ENCODE measurements at regions of chr10 and their contacts with region 1.

Region 1: GRCh38 chr10:97731346-97732051 is 5.4 kb upstream of the ZFYVE27 start:
- DNase-seq: peak in 5 of 6 donors; percentile 13 to 79 (median 51)
- ATAC-seq: peak; percentile 81 to 91 (median 90)
- H3K4me3 ChIP-seq: no peak overlapping the region
- H3K27ac ChIP-seq: no peak overlapping the region
- H3K4me1 ChIP-seq: peaks cover 0 to 2% (median 0%) of the 10 kb centered on the region in 3 donors
- H3K27me3 ChIP-seq: no peaks in the 10 kb centered on the region
- CTCF ChIP-seq: peak; percentile 49 to 72 (median 68)

Region 2: GRCh38 chr10:97434055-97434454 is 297.4 kb before region 1 on chr10:
- intact Hi-C with region 1: no loop called
- DNase-seq: no peak
- ATAC-seq: peak in 1 of 4 donors; percentile 29
- H3K4me3 ChIP-seq: no peak overlapping the region
- H3K27ac ChIP-seq: no peak overlapping the region
- H3K4me1 ChIP-seq: no peaks in the 10 kb centered on the region
- H3K27me3 ChIP-seq: no peaks in the 10 kb centered on the region
- CTCF ChIP-seq: no peak

Region 3: DNA sequence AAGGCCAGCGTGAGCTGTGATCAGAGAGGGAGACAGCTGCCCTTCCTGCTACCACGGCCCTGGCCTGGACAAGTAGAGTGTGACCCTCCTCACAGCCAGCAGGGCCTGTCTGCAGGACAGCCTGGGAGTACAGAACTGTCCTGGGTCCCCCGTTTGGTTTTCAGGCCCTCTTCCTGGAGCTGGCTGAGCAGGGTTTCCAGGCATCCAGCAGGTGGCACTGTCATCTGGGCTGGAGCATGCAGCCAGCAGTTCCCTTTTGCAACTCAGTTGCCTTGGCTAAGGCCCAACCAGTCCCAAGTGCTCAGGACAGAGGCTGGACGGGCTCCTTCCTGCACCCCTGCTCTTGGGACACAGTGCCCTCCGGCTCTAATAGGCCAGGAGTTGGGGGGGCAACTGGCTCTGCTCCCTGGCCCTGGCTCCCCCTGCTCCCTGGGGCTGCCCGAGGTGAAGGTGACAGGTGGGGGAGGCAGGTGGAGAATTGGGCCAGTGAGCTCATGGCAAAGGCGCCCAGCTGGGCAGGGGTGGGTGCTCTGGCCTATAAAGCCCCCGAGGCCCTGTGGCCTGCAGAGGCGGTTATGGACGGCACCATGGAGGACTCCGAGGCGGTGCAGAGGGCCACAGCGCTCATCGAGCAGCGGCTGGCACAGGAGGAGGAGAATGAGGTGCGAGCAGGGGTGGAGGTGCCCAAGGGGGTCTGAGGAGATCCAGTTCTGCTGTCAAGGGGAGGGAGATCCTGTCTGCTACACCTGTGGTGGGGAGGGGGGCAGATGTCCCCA is 159.1 kb before region 1 on chr10 and contains the start of gene ANKRD2:
- intact Hi-C with region 1: loop called in 1 of 3 experiments (anchors 10 kb)
- DNase-seq: peak; percentile 70 to 89 (median 82)
- ATAC-seq: peak; percentile 60 to 88 (median 86)
- H3K4me3 ChIP-seq: no peak within 1 kb of the TSS
- H3K27ac ChIP-seq: peak within 1 kb of the TSS in 2 of 4 donors; percentile 23 to 24
- H3K4me1 ChIP-seq: peaks cover 0 to 5% (median 0%) of the 10 kb centered on the region in 3 donors
- H3K27me3 ChIP-seq: no peaks in the 10 kb centered on the region
- CTCF ChIP-seq: peak; percentile 73 to 83 (median 78)
- total RNA-seq, gene ANKRD2: 0.12 to 0.56 (median 0.29) TPM

Region 4: GRCh38 chr10:97676770-97677581 is 54.5 kb before region 1 on chr10:
- intact Hi-C with region 1: loop called in 2 of 3 experiments (anchors 5 to 10 kb)
- DNase-seq: no peak
- ATAC-seq: peak; percentile 79 to 92 (median 87)
- H3K4me3 ChIP-seq: no peak overlapping the region
- H3K27ac ChIP-seq: no peak overlapping the region
- H3K4me1 ChIP-seq: no peaks in the 10 kb centered on the region
- H3K27me3 ChIP-seq: no peaks in the 10 kb centered on the region
- CTCF ChIP-seq: peak; percentile 70 to 88 (median 76)

Region 5: GRCh38 chr10:97861097-97861750 is 129.7 kb after region 1 on chr10:
- intact Hi-C with region 1: no loop called
- DNase-seq: peak in 1 of 6 donors; percentile 37
- ATAC-seq: peak; percentile 59 to 93 (median 78)
- H3K4me3 ChIP-seq: no peak overlapping the region
- H3K27ac ChIP-seq: peak overlapping the region in 1 of 4 donors; percentile 33
- H3K4me1 ChIP-seq: peaks cover 0 to 11% (median 5%) of the 10 kb centered on the region in 3 donors
- H3K27me3 ChIP-seq: no peaks in the 10 kb centered on the region
- CTCF ChIP-seq: no peak